ENCODE measurements at regions of chr10 and their contacts with region 1.

Region 1: GRCh38 chr10:11165591-11166543 is 148.2 kb downstream of the CELF2 start:
- DNase-seq: no peak
- ATAC-seq: peak; percentile 55
- H3K4me3 Mint-ChIP-seq: no peak overlapping the region
- H3K27ac Mint-ChIP-seq: peak overlapping the region; percentile 99
- H3K4me1 Mint-ChIP-seq: peaks cover 51% of the 10 kb centered on the region
- H3K27me3 Mint-ChIP-seq: no peaks in the 10 kb centered on the region
- CTCF ChIP-seq: no peak

Region 2: DNA sequence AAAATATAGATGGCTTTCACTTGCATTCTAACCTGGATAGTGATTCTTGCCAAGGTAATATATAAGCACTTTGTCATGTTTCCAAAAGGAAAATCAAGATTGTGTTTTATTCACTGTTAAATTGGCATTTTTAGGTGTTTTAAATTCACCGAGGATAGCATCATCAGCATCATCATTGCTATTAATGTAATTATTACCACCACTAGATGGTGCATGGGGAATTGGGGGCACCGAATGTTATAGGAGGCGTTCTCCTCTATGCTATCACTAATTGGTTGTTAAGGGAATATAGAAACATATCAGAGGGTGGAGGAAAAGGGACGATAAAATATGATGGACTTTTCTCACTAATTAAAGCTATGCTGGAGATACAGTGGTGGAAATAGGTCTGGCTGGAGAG is 52.7 kb before region 1 on chr10:
- CTCF ChIA-PET with region 1: interaction called, 12 read pairs
- POLR2A ChIA-PET with region 1: interaction called, 11 read pairs
- intact Hi-C with region 1: loop called (anchors 1 kb)
- DNase-seq: no peak
- ATAC-seq: peak; percentile 73
- H3K4me3 Mint-ChIP-seq: no peak overlapping the region
- H3K27ac Mint-ChIP-seq: no peak overlapping the region
- H3K4me1 Mint-ChIP-seq: peaks cover 9% of the 10 kb centered on the region
- H3K27me3 Mint-ChIP-seq: no peaks in the 10 kb centered on the region
- CTCF ChIP-seq: no peak

Region 3: DNA sequence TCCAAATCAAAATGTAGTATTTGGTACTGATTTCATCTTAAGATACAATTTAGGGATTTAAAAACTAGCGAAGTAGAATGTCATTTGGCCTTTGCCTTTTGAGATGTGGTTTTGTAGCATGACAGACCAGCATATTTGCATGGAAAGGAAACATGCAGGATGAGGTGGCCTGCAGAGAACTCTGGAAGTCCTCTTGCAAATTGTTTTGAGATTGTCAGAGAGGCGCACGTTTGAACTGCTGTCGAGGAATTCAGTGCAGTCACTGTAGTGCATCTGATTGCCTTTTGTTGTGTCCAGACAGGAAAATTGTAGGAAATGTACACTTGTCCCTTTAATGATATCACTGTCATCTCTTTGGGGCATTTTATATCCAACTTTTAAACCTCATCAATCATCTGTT is 11.5 kb before region 1 on chr10:
- CTCF ChIA-PET with region 1: interaction called, 9 read pairs
- POLR2A ChIA-PET with region 1: interaction called, 33 read pairs
- intact Hi-C with region 1: loop called (anchors 1 kb)
- DNase-seq: no peak
- ATAC-seq: peak; percentile 43
- H3K4me3 Mint-ChIP-seq: peak overlapping the region; percentile 24
- H3K27ac Mint-ChIP-seq: no peak overlapping the region
- H3K4me1 Mint-ChIP-seq: peaks cover 80% of the 10 kb centered on the region
- H3K27me3 Mint-ChIP-seq: no peaks in the 10 kb centered on the region
- CTCF ChIP-seq: no peak

Region 4: DNA sequence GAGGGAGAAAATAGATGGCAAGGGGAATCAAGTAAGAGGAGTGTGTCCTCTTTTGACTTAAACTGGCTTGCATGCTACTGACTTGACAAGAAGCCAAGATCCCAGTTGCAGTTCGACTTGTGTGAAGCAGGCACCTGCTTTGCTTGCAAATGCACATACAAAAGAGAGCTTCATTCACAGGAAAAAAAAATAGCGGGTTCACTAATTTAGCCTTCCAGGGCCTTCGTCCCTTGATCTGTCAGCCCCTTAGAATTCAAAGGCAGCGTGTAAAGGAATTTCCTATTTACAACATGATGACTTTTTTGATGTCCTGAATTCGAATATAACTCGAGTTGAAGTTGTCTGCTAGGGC is 43.9 kb after region 1 on chr10:
- CTCF ChIA-PET with region 1: no interaction called
- POLR2A ChIA-PET with region 1: interaction called, 9 read pairs
- intact Hi-C with region 1: loop called (anchors 1 kb)
- DNase-seq: no peak
- ATAC-seq: peak; percentile 30
- H3K4me3 Mint-ChIP-seq: peak overlapping the region; percentile 78
- H3K27ac Mint-ChIP-seq: peak overlapping the region; percentile 92
- H3K4me1 Mint-ChIP-seq: peaks cover 96% of the 10 kb centered on the region
- H3K27me3 Mint-ChIP-seq: no peaks in the 10 kb centered on the region
- CTCF ChIP-seq: no peak

Region 5: GRCh38 chr10:11270135-11270857 is 104.4 kb after region 1 on chr10:
- CTCF ChIA-PET with region 1: interaction called, 25 read pairs
- POLR2A ChIA-PET with region 1: interaction called, 3 read pairs
- intact Hi-C with region 1: loop called (anchors 1 kb)
- DNase-seq: peak; percentile 57
- ATAC-seq: peak; percentile 89
- H3K4me3 Mint-ChIP-seq: peak overlapping the region; percentile 28
- H3K27ac Mint-ChIP-seq: peak overlapping the region; percentile 77
- H3K4me1 Mint-ChIP-seq: peaks cover 64% of the 10 kb centered on the region
- H3K27me3 Mint-ChIP-seq: no peaks in the 10 kb centered on the region
- CTCF ChIP-seq: no peak

Region 6: GRCh38 chr10:11387551-11388222 is 221.8 kb after region 1 on chr10:
- CTCF ChIA-PET with region 1: no interaction called
- POLR2A ChIA-PET with region 1: no interaction called
- intact Hi-C with region 1: no loop called
- DNase-seq: no peak
- ATAC-seq: no peak
- H3K4me3 Mint-ChIP-seq: no peak overlapping the region
- H3K27ac Mint-ChIP-seq: no peak overlapping the region
- H3K4me1 Mint-ChIP-seq: peaks cover 3% of the 10 kb centered on the region
- H3K27me3 Mint-ChIP-seq: peaks cover under 1% of the 10 kb centered on the region
- CTCF ChIP-seq: no peak

Region 7: GRCh38 chr10:12785415-12785831 is 1619.6 kb after region 1 on chr10:
- CTCF ChIA-PET with region 1: no interaction called
- POLR2A ChIA-PET with region 1: no interaction called
- intact Hi-C with region 1: no loop called
- DNase-seq: no peak
- ATAC-seq: no peak
- H3K4me3 Mint-ChIP-seq: no peak overlapping the region
- H3K27ac Mint-ChIP-seq: no peak overlapping the region
- H3K4me1 Mint-ChIP-seq: peaks cover 4% of the 10 kb centered on the region
- H3K27me3 Mint-ChIP-seq: no peaks in the 10 kb centered on the region
- CTCF ChIP-seq: no peak